T-cell (primary cell): ENCODE measurements at regions of chr18 and their contacts with region 1.

Region 1: DNA sequence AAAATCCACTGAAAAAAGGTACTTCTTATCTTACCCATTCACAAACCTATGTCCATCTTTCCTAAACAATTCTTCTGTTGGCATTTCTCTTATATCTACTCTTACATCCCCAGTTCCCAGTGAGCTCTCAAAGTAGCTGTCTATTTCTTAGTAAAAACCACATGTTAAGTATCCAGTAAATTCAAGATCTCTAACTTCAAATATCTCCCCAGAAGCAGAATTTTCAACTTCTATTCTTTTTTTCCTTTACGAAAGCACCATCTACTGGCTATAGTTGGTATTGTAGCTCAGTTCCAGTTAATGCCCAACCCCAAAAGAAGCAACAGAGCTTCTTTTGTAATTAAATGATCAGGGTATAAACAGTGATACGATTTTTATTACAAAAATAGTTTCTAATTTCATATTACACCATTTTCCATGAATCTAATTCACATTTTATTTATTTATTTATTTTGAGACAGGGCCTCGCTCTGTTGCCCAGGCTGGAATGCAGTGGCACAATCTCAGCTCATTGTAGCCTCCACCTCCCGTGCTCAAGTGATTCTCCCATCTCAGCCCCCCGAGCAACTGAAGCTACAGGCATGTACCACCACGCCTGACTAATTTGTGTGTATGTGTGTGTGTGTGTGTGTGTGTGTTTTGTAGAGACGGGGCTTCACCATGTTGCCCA is 28.5 kb downstream of the HRH4 start:
- DNase-seq: peak in 1 of 35 experiments; percentile 62
- ATAC-seq: peak in 1 of 4 experiments; percentile 39
- H3K4me3 ChIP-seq: no peak overlapping the region
- H3K4me3 Mint-ChIP-seq: no peak overlapping the region
- H3K27ac ChIP-seq: no peak overlapping the region
- H3K27ac Mint-ChIP-seq: peak overlapping the region in 1 of 2 donors; percentile 16
- H3K4me1 ChIP-seq: peaks cover 0 to 16% of the 10 kb centered on the region in 2 experiments
- H3K4me1 Mint-ChIP-seq: peaks cover 15 to 22% (median 16%) of the 10 kb centered on the region in 3 donors
- H3K27me3 ChIP-seq: peaks cover 0 to 16% of the 10 kb centered on the region in 2 experiments
- H3K27me3 Mint-ChIP-seq: peaks cover 2 to 18% of the 10 kb centered on the region in 2 donors

Region 2: GRCh38 chr18:23416298-23416697 is 1072.7 kb before region 1 on chr18:
- CTCF ChIA-PET with region 1: no interaction called
- POLR2A ChIA-PET with region 1: no interaction called
- DNase-seq: no peak
- ATAC-seq: no peak
- H3K4me3 ChIP-seq: no peak overlapping the region
- H3K4me3 Mint-ChIP-seq: no peak overlapping the region
- H3K27ac ChIP-seq: no peak overlapping the region
- H3K27ac Mint-ChIP-seq: no peak overlapping the region
- H3K4me1 ChIP-seq: no peaks in the 10 kb centered on the region
- H3K4me1 Mint-ChIP-seq: no peaks in the 10 kb centered on the region
- H3K27me3 ChIP-seq: no peaks in the 10 kb centered on the region
- H3K27me3 Mint-ChIP-seq: no peaks in the 10 kb centered on the region

Region 3: GRCh38 chr18:24176727-24177416 is 312.1 kb before region 1 on chr18:
- CTCF ChIA-PET with region 1: interaction called, 3 to 13 read pairs
- POLR2A ChIA-PET with region 1: no interaction called
- DNase-seq: peak in 25 of 35 experiments; percentile 2 to 39 (median 11)
- ATAC-seq: no peak
- H3K4me3 ChIP-seq: no peak overlapping the region
- H3K4me3 Mint-ChIP-seq: no peak overlapping the region
- H3K27ac ChIP-seq: no peak overlapping the region
- H3K27ac Mint-ChIP-seq: no peak overlapping the region
- H3K4me1 ChIP-seq: no peaks in the 10 kb centered on the region
- H3K4me1 Mint-ChIP-seq: peaks cover 0 to 4% (median 0%) of the 10 kb centered on the region in 3 donors
- H3K27me3 ChIP-seq: no peaks in the 10 kb centered on the region
- H3K27me3 Mint-ChIP-seq: peaks cover 0 to 2% of the 10 kb centered on the region in 2 donors

Region 4: GRCh38 chr18:24362758-24363157 is 126.2 kb before region 1 on chr18:
- CTCF ChIA-PET with region 1: interaction called, 30 to 44 read pairs
- POLR2A ChIA-PET with region 1: no interaction called
- DNase-seq: no peak
- ATAC-seq: no peak
- H3K4me3 ChIP-seq: no peak overlapping the region
- H3K4me3 Mint-ChIP-seq: no peak overlapping the region
- H3K27ac ChIP-seq: no peak overlapping the region
- H3K27ac Mint-ChIP-seq: no peak overlapping the region
- H3K4me1 ChIP-seq: no peaks in the 10 kb centered on the region
- H3K4me1 Mint-ChIP-seq: no peaks in the 10 kb centered on the region
- H3K27me3 ChIP-seq: no peaks in the 10 kb centered on the region
- H3K27me3 Mint-ChIP-seq: no peaks in the 10 kb centered on the region

Region 5: GRCh38 chr18:24474406-24474805 is 14.6 kb before region 1 on chr18:
- CTCF ChIA-PET with region 1: interaction called in 1 of 2 experiments, 10 read pairs
- POLR2A ChIA-PET with region 1: no interaction called
- DNase-seq: no peak
- ATAC-seq: no peak
- H3K4me3 ChIP-seq: no peak overlapping the region
- H3K4me3 Mint-ChIP-seq: no peak overlapping the region
- H3K27ac ChIP-seq: no peak overlapping the region
- H3K27ac Mint-ChIP-seq: no peak overlapping the region
- H3K4me1 ChIP-seq: peaks cover 2 to 6% of the 10 kb centered on the region in 2 experiments
- H3K4me1 Mint-ChIP-seq: peaks cover 8 to 23% (median 10%) of the 10 kb centered on the region in 3 donors
- H3K27me3 ChIP-seq: no peaks in the 10 kb centered on the region
- H3K27me3 Mint-ChIP-seq: peaks cover 0 to 3% of the 10 kb centered on the region in 2 donors

Region 6: GRCh38 chr18:24502644-24503523 is 13.9 kb after region 1 on chr18:
- CTCF ChIA-PET with region 1: interaction called, 3 to 15 read pairs
- POLR2A ChIA-PET with region 1: no interaction called
- DNase-seq: no peak
- ATAC-seq: no peak
- H3K4me3 ChIP-seq: no peak overlapping the region
- H3K4me3 Mint-ChIP-seq: no peak overlapping the region
- H3K27ac ChIP-seq: no peak overlapping the region
- H3K27ac Mint-ChIP-seq: no peak overlapping the region
- H3K4me1 ChIP-seq: no peaks in the 10 kb centered on the region
- H3K4me1 Mint-ChIP-seq: no peaks in the 10 kb centered on the region
- H3K27me3 ChIP-seq: peaks cover 0 to 6% of the 10 kb centered on the region in 2 experiments
- H3K27me3 Mint-ChIP-seq: peaks cover 1 to 9% of the 10 kb centered on the region in 2 donors

Region 7: GRCh38 chr18:24567199-24567598 is 78.2 kb after region 1 on chr18:
- CTCF ChIA-PET with region 1: no interaction called
- POLR2A ChIA-PET with region 1: no interaction called
- DNase-seq: no peak
- ATAC-seq: no peak
- H3K4me3 ChIP-seq: no peak overlapping the region
- H3K4me3 Mint-ChIP-seq: no peak overlapping the region
- H3K27ac ChIP-seq: no peak overlapping the region
- H3K27ac Mint-ChIP-seq: no peak overlapping the region
- H3K4me1 ChIP-seq: no peaks in the 10 kb centered on the region
- H3K4me1 Mint-ChIP-seq: no peaks in the 10 kb centered on the region
- H3K27me3 ChIP-seq: no peaks in the 10 kb centered on the region
- H3K27me3 Mint-ChIP-seq: peaks cover 2 to 3% of the 10 kb centered on the region in 2 donors

Region 8: DNA sequence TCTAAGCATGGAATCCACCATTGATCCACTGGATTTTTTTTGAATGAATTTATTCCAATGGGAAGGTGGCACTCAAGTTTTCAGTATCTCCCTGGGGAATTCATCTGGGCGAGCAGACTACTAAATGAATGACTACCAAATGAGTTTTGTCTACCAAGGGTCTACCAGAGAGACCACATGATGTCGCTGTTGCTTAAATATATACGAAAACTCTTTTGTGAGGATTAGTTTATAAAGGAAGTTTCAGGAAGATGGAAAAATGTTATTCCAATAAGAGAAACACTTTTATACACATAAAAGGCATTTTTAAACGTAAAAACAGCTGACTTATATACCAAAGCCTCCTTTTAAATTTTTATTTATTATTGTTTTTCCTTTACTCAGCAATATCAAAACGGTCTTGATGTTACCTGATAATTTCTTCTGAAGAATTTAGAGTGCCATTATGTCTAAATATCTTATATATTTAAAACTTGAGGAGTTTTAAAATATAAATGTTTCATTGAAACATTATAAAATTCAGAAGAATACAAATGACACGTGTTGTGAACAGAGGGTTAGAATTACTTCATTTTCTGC is 111.2 kb after region 1 on chr18:
- CTCF ChIA-PET with region 1: no interaction called
- POLR2A ChIA-PET with region 1: no interaction called
- DNase-seq: peak in 1 of 35 experiments; percentile 55
- ATAC-seq: no peak
- H3K4me3 ChIP-seq: no peak overlapping the region
- H3K4me3 Mint-ChIP-seq: no peak overlapping the region
- H3K27ac ChIP-seq: no peak overlapping the region
- H3K27ac Mint-ChIP-seq: no peak overlapping the region
- H3K4me1 ChIP-seq: no peaks in the 10 kb centered on the region
- H3K4me1 Mint-ChIP-seq: no peaks in the 10 kb centered on the region
- H3K27me3 ChIP-seq: no peaks in the 10 kb centered on the region
- H3K27me3 Mint-ChIP-seq: peaks cover 11 to 14% of the 10 kb centered on the region in 2 donors

Region 9: DNA sequence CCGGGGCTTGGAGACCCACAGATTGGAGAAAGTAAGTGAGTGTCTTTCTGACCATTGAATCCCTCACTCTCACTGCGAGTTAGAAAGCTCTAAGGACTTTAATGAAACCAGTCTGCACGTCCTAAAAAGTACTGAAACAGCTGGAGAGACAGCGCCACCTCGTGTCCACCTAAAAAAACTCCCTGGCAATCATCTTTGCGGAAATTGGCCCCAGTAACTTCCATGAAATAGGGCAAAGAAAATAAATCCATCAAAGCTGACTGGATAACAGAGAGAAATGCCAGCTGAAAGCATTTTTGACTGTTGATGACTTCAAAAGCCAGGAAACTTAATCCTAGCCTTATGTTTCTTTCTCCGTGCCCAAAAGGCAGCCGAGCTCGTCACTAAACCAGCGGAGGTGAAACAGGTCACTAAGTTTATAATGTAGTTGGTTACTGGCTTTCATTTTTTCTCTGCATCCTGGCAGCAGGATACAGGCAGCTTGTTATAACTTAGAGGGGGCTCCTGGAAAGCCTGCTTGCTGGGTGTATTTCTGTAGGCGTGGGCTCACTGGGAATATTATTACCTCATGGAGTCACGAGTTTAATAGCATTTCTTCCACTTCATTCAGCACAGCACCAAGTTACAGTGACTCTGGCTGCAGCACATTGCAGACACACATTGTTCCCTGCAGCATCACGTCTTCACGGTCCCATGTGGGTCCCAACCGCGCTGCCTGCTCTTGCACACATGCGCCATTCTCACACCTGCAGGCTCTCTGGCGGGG is 238.0 kb after region 1 on chr18:
- CTCF ChIA-PET with region 1: interaction called, 7 to 13 read pairs
- POLR2A ChIA-PET with region 1: no interaction called
- DNase-seq: peak in 30 of 35 experiments; percentile 9 to 76 (median 36)
- ATAC-seq: no peak
- H3K4me3 ChIP-seq: no peak overlapping the region
- H3K4me3 Mint-ChIP-seq: no peak overlapping the region
- H3K27ac ChIP-seq: no peak overlapping the region
- H3K27ac Mint-ChIP-seq: no peak overlapping the region
- H3K4me1 ChIP-seq: peaks cover 0 to 2% of the 10 kb centered on the region in 2 experiments
- H3K4me1 Mint-ChIP-seq: peaks cover 0 to 2% (median 2%) of the 10 kb centered on the region in 3 donors
- H3K27me3 ChIP-seq: peaks cover 0 to 13% of the 10 kb centered on the region in 2 experiments
- H3K27me3 Mint-ChIP-seq: peaks cover 12 to 24% of the 10 kb centered on the region in 2 donors